ENCODE measurements at regions of chr11 and their contacts with region 1.

Region 1: GRCh38 chr11:130118636-130119387 is 40.8 kb upstream of the ST14 start:
- DNase-seq: peak; percentile 83
- H3K4me3 ChIP-seq: peak overlapping the region; percentile 61
- H3K27ac ChIP-seq: peak overlapping the region; percentile 90
- H3K4me1 ChIP-seq: peaks cover 89% of the 10 kb centered on the region
- CTCF ChIP-seq: no peak

Region 2: DNA sequence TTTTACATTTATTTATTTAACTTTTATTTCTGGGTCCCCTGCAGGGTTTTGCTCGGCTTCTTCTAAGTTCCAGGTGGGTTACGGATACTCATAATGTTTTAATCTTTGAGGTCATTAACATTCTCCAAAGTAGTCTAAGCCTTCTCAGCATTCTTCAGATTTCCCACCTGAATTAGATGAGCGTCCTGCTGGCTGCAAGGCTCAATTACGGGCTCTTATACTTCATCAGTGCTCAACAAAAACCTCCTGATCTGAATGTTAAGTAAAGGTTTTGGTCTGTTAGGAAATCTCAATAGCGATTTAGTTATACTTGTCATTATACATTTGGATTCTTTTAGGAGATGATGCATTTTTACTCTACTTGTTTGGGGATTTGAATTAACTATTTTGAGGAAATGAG is 196.1 kb before region 1 on chr11:
- CTCF ChIA-PET with region 1: no interaction called
- POLR2A ChIA-PET with region 1: interaction called, 3 read pairs
- intact Hi-C with region 1: loop called (anchors 2 kb)
- DNase-seq: no peak
- H3K4me3 ChIP-seq: no peak overlapping the region
- H3K27ac ChIP-seq: no peak overlapping the region
- H3K4me1 ChIP-seq: peaks cover 20% of the 10 kb centered on the region
- CTCF ChIP-seq: no peak

Region 3: DNA sequence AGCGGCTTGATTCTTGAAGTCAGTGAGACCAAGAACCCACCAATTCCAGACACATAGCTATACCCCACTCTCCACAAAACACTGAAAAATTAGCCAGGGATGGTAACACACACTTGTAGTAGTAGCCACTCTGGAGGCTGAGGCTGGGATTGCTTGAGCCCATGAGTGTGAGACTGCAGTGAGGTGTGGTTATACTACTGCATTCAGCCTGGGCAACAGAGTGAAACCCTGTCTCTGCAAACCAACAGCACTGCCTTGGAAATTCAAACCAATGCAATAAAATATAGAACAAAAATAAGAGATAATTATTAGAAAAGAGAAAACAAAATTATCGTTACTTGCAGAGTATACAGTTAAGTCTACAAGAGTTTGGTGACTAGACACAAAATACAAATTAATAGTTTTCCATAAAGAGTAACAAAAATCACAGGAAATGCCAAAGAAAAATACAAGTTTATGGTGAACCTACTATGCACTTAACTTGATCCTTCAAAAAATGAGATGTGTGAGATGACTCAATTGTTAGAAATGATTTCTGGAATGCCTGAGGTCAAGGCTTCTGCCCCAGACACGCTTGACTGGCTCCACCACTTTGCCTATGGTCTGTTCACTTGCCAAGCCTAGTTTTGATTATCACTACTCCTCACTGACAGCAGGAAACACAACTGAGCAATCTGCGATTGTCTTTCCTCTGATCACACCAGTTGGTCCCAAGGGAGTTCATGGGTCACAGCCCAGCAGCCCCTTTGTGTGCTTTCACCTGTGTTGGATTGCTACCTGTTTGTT is 95.8 kb before region 1 on chr11:
- CTCF ChIA-PET with region 1: no interaction called
- POLR2A ChIA-PET with region 1: interaction called, 7 read pairs
- intact Hi-C with region 1: loop called (anchors 5 kb)
- DNase-seq: peak; percentile 98
- H3K4me3 ChIP-seq: peak overlapping the region; percentile 49
- H3K27ac ChIP-seq: peak overlapping the region; percentile 76
- H3K4me1 ChIP-seq: peaks cover 75% of the 10 kb centered on the region
- CTCF ChIP-seq: no peak

Region 4: DNA sequence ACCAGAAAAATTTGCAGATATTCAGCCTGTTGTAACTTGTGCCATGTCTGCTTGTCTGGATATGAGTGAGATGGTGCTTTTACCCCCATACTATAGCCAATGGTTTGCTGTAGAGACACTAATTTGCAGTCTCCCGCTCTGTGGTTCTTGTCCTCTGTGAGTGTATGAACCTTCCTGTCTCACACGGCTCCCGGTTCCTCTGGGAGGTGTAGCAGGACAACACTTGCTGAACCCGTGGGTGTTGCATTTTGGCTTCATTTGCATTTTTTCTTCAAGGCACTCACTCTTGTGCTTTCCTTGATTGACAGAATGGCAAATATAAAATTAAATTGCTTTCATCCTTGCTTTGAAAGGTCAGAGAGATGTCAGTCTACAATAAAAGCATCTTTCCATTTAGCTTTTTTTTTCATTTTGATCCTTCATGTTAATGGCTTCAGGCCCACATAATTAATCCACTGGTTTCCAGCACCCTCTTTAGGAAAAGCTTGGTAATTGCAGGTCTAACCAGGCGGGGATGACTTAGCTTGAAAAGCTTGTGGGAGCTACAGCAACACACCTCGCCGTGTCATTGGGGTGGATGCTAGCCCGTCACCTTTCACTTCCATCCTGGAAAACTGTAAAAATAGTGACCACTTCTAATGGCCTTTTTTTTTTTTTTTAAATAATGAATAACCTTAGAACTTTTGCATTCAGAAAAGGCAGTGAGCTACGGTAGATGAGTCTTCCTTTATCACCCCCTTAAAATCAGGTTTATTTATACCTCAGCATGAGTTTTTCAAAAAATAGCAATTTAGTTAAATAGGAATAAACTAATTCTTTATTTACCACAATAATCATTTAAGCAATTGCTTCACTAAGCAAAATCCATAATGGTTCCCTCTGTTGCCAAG is 13.4 kb after region 1 on chr11:
- CTCF ChIA-PET with region 1: interaction called, 5 read pairs
- POLR2A ChIA-PET with region 1: interaction called, 43 read pairs
- intact Hi-C with region 1: no loop called
- DNase-seq: peak; percentile 83
- H3K4me3 ChIP-seq: no peak overlapping the region
- H3K27ac ChIP-seq: peak overlapping the region; percentile 51
- H3K4me1 ChIP-seq: peaks cover 23% of the 10 kb centered on the region
- CTCF ChIP-seq: peak; percentile 99

Region 5: DNA sequence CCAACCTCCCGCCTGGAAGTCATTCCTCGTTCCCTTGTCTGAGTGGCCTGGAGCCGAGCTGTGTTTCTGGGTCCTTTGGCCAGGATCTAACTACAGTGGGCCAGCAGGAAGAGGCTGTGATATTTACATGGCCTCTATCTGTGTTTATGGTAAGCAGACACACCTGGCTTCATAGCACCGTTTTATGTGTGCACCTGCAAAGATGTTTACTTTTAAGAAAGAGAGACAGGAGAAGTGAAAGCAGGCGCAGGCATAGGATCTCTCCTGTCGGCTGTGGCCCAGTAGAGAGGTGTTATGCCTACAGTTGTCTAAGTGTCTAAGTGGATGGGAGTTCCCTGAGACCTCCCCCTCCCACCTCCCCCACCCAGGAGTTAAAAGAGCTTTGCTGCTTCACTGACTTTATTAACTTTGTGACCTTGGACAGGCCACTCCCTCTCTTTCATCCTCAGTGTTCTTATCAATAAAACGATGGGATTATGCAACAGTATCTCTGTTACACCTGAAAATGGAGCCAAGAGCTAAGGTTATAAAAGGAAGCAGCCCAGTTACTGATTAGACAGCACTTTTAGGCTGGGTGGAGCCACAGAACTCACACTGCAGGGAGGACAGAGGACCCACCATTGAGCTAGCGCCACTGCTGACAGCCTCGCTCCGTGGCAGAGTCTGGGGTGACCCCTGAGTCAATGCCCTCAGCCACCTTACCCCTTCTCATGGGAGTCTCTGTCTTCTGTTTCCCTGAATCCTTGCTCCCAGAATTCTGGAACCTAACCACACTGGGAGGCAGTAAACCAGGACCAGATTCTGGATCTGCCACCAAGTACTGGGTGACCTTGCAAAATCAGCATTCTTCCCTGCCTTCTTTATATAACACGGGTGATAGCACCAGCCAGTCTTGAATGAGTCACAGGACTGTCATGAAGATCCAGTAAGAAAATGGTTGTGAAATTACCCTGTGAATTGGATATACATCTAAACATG is 62.8 kb after region 1 on chr11:
- CTCF ChIA-PET with region 1: no interaction called
- POLR2A ChIA-PET with region 1: interaction called, 4 read pairs
- intact Hi-C with region 1: loop called (anchors 2 kb)
- DNase-seq: peak; percentile 98
- H3K4me3 ChIP-seq: peak overlapping the region; percentile 64
- H3K27ac ChIP-seq: peak overlapping the region; percentile 99
- H3K4me1 ChIP-seq: peaks cover 96% of the 10 kb centered on the region
- CTCF ChIP-seq: peak; percentile 35; the same call in 1 of the 2 replicates

Region 6: DNA sequence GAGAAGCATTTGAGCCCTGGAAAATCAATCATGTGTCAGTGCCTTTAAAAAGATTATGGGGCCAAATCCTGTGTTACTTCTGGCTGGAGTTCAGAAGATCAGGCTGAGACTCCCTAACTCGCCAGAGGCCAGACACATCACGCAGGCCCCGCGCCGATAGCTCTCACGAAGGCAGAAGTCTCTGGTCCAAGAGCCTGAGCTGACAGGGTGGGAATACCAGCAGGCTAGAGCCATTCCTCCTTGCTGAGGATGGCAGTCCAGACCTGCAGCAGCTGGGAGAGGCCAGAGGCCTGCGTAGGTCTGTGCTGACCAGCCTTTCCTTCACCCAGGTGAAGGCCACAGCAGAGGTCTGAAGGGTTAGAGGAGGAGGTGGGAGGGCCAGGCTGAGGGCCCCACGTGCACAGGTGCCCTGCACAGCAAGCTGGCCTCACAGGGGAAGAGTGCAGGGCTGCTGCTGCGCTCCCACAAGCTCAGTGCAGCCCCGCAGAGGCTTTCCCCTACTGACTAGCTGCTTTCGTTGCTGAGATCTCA is 93.7 kb after region 1 on chr11:
- CTCF ChIA-PET with region 1: no interaction called
- POLR2A ChIA-PET with region 1: no interaction called
- intact Hi-C with region 1: no loop called
- DNase-seq: no peak
- H3K4me3 ChIP-seq: no peak overlapping the region
- H3K27ac ChIP-seq: peak overlapping the region; percentile 3
- H3K4me1 ChIP-seq: peaks cover 9% of the 10 kb centered on the region
- CTCF ChIP-seq: no peak

Measured in OCI-LY7 (cell line).